ENCODE measurements at regions of chr16 and their contacts with region 1.

Region 1: DNA sequence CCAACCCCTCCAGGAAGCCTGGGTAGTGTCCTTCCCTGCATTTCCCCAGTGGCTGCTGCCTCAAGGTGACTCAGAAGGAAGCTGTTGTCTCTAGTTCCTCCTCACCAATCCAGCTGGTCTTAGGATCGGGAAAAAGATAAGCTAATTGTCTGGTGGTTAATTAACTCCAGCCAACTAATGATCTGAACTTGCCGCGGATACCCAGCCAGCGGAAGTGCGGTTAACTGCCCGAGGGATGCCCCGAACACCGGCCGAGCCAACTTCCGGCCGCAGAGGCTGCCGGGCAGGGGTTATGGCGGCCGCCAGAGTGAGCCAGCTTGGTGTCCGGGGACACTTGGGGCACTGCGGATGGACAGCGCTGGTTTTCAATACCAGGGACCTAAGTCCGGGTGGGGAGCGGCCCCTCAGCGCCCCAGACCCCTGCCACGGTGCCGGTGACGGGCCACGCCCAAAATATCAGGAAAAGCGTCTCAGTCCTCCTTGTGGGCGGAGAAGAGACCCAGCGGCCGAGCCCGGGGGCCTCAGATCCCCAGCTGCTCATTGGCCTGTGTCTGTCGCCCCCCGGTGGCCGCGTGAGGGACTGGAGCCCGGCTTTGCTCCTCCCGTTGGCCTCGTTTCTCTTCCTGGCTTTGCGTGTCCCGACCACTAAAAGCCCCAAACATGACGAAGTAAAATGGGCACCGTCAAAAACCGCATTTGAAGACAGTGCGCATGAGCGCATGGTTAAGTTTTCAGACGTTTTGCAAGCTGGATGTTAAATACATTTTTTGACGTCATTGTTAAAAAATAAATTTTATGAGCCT is 10.2 kb upstream of the PRSS22 start:
- DNase-seq: peak; percentile 71 to 91
- ATAC-seq: peak; percentile 94
- H3K4me3 ChIP-seq: peak overlapping the region; percentile 71 to 79 (median 77)
- H3K27ac ChIP-seq: peak overlapping the region; percentile 87 to 93 (median 88)
- H3K4me1 ChIP-seq: peaks cover 8 to 10% of the 10 kb centered on the region in 2 donors
- H3K27me3 ChIP-seq: no peaks in the 10 kb centered on the region
- CTCF ChIP-seq: peak; percentile 95 to 98 (median 98)
- POLR2A ChIP-seq: peak; percentile 30 to 65

Region 2: GRCh38 chr16:2777231-2777902 is 90.8 kb before region 1 on chr16 and contains the start of gene ELOB:
- in situ Hi-C with region 1: no loop called
- intact Hi-C with region 1: loop called (anchors 5 kb)
- DNase-seq: peak; percentile 72 to 82
- ATAC-seq: peak; percentile 89 to 90
- H3K4me3 ChIP-seq: peak within 1 kb of the TSS; percentile 95 to 100 (median 98)
- H3K27ac ChIP-seq: peak within 1 kb of the TSS; percentile 98 to 100 (median 100)
- H3K4me1 ChIP-seq: peaks cover 23 to 31% of the 10 kb centered on the region in 2 donors
- H3K27me3 ChIP-seq: no peaks in the 10 kb centered on the region
- CTCF ChIP-seq: no peak
- POLR2A ChIP-seq: peak; percentile 61 to 78
- total RNA-seq, gene ELOB: 216 to 970 (median 375) TPM

Region 3: GRCh38 chr16:2911580-2912329 is 43.6 kb after region 1 on chr16 and contains the start of gene FLYWCH1:
- in situ Hi-C with region 1: no loop called
- intact Hi-C with region 1: loop called (anchors 2 kb)
- DNase-seq: peak; percentile 97 to 98
- ATAC-seq: peak; percentile 90 to 95
- H3K4me3 ChIP-seq: peak within 1 kb of the TSS; percentile 70 to 91 (median 83)
- H3K27ac ChIP-seq: peak within 1 kb of the TSS; percentile 89 to 97 (median 91)
- H3K4me1 ChIP-seq: peaks cover 13 to 15% of the 10 kb centered on the region in 2 donors
- H3K27me3 ChIP-seq: no peaks in the 10 kb centered on the region
- CTCF ChIP-seq: peak in 1 of 5 experiments; percentile 29
- POLR2A ChIP-seq: peak; percentile 89 to 91
- total RNA-seq, gene FLYWCH1: 41.7 to 49.7 (median 44.0) TPM

Region 4: GRCh38 chr16:2968738-2969544 is 100.8 kb after region 1 on chr16 and contains the start of gene PAQR4:
- in situ Hi-C with region 1: no loop called
- intact Hi-C with region 1: no loop called
- DNase-seq: peak; percentile 73 to 81
- ATAC-seq: peak; percentile 83 to 93
- H3K4me3 ChIP-seq: peak within 1 kb of the TSS; percentile 59 to 95 (median 68)
- H3K27ac ChIP-seq: peak within 1 kb of the TSS; percentile 41 to 73 (median 60)
- H3K4me1 ChIP-seq: peaks cover 12 to 34% of the 10 kb centered on the region in 2 donors
- H3K27me3 ChIP-seq: peaks cover 43 to 44% (median 44%) of the 10 kb centered on the region in 3 donors
- CTCF ChIP-seq: peak in 2 of 5 experiments; percentile 13 to 15
- POLR2A ChIP-seq: peak; percentile 39 to 52
- total RNA-seq, gene PAQR4: 4.2 to 14.6 (median 10.2) TPM

Region 5: DNA sequence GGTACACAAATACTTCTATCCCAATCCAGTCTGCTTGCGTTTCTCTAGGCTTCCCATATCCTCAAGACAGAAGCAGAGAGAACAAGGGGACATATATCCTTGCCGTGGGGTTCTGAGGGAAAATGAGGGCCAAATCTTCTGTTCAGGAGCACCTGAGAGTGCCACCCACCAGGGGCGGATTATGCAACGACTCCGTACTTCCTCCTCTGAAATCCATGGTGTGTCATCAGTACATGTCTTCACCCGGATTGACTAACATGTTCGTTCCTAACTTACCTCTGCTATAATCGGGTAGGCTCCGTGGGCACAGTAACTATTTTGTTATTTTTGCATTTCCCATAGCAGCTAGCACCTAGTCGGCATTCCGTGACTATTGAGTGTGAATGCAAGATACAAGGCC is 374.5 kb after region 1 on chr16:
- in situ Hi-C with region 1: no loop called
- intact Hi-C with region 1: no loop called
- DNase-seq: no peak
- ATAC-seq: no peak
- H3K4me3 ChIP-seq: no peak overlapping the region
- H3K27ac ChIP-seq: no peak overlapping the region
- H3K4me1 ChIP-seq: no peaks in the 10 kb centered on the region
- H3K27me3 ChIP-seq: no peaks in the 10 kb centered on the region
- CTCF ChIP-seq: no peak
- POLR2A ChIP-seq: no peak

Measured in gastrocnemius medialis (tissue), 4 donors.